ENCODE measurements at regions of chr7 and their contacts with region 1.

Region 1: GRCh38 chr7:104848138-104848990 is 165.6 kb upstream of the KMT2E start:
- DNase-seq: peak; percentile 62
- H3K4me3 Mint-ChIP-seq: no peak overlapping the region
- H3K27ac Mint-ChIP-seq: no peak overlapping the region
- H3K4me1 Mint-ChIP-seq: no peaks in the 10 kb centered on the region
- H3K27me3 Mint-ChIP-seq: peaks cover 41% of the 10 kb centered on the region

Region 2: DNA sequence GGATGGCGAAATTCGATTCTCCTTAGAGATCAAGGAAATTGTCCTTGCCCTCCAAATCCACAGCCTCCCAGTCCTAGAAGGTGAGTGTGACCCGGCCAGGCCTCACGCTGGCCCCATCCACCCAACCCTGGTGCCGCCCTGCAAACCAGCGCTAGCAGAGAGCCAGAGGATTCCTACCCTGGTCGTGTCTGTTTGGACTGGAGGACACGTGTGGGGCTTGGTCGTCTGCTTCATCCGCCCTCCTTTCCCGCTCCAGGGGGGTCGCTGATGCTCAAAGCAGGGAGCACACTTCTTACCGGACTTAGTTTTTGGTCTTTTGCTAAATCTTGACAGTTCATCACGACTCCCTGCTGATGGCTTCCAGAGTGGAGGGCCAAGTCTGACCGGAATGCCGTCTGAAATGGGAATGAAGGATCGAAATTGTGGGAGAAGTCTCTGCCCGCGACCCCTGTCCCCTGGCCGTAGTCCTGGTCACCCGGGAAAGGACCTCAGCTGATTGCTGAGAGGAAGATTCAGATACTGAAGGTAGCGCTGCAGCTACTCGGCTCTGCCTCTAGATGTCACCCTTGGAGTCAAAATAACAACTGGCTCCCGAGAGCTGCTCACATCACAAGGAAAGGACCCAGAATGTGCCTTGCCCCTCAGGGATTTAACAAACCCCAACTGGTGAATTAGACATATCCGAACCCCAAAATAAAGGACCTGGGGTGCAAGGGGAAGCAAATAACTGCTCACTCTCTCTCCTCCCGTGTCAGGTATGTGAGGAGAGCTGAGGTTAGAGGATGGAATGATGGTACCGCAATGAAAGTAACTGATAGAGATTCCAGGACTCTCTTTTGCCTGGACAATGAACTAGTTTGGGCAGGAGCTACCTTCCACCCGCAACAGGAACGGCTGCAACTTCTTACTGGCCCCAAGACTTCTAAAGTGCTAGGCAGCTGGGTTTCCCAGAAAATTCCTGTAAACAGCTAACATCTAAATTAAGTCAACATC is 617.0 kb before region 1 on chr7:
- CTCF ChIA-PET with region 1: interaction called, 20 read pairs
- DNase-seq: peak; percentile 48
- H3K4me3 Mint-ChIP-seq: no peak overlapping the region
- H3K27ac Mint-ChIP-seq: no peak overlapping the region
- H3K4me1 Mint-ChIP-seq: no peaks in the 10 kb centered on the region
- H3K27me3 Mint-ChIP-seq: peaks cover 20% of the 10 kb centered on the region

Region 3: GRCh38 chr7:104643587-104644217 is 204.7 kb before region 1 on chr7:
- CTCF ChIA-PET with region 1: interaction called, 11 read pairs
- DNase-seq: peak; percentile 21
- H3K4me3 Mint-ChIP-seq: no peak overlapping the region
- H3K27ac Mint-ChIP-seq: no peak overlapping the region
- H3K4me1 Mint-ChIP-seq: no peaks in the 10 kb centered on the region
- H3K27me3 Mint-ChIP-seq: no peaks in the 10 kb centered on the region

Region 4: DNA sequence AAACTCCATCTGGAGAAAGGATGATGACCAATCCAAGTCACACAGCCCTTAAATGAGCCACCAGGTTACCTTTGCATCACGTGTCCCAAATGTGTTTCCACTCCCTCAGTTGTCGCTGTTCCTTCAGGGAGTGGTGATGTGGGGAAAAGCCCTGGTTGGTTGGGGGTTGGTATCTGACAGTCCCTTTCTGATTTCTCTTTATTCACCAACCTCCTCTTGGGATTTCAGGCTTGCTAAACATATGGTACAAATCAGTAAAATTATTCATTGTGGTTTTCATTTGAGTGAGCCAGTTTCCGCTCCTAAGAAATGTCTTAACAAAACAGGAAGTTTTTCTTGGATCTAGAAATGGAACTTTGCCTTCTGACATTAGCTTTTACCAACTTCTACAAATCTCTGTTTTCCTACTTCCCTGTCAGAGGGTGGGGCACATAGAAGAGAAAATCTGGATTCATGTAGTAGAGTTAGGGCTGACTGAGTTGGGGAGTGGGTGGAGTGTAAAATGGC is 125.6 kb after region 1 on chr7:
- CTCF ChIA-PET with region 1: no interaction called
- DNase-seq: no peak
- H3K4me3 Mint-ChIP-seq: no peak overlapping the region
- H3K27ac Mint-ChIP-seq: no peak overlapping the region
- H3K4me1 Mint-ChIP-seq: no peaks in the 10 kb centered on the region
- H3K27me3 Mint-ChIP-seq: no peaks in the 10 kb centered on the region

Measured in activated naive CD4-positive, alpha-beta T cell treated with anti-CD3 and anti-CD28 coated beads, Interleukin-2, amount 10 ng/mL, durations not matched to agents 7 days and 5 days (primary cell).